Dorsolateral prefrontal cortex (tissue), 120 donors: ENCODE measurements at regions of chr2 and their contacts with region 1.

Region 1: DNA sequence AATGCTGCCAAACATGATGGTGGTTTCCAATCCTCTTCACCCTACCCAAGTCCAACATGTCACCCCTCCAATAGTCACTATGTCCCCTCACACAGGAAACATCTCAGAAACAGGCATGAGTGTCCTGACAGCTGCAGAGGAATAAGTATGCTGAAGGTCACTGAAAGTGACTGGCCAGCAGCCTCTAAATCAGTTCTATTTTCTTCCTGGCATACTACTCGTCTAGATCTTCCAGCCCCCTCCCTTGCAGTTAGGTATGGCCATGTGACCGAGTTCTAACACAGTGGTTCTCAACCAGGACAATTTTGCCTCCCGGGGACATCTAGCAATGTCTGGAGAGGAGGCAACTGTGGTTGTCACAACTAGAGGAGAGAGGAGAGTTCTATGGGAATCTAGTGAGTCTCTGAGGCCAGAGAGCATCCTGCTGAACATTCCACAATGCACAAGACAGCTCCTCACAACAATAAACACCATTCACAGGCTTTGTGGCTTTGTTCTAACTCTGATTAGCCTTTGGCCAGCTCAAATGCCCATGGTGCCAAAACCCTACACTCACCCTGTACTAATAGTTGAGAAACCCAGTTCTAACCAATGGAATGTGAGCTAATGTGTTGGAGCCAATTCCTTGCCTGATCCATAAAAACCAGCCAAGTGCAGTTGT is 12.6 kb upstream of the ID2 start:
- DNase-seq: peak in 2 of 10 donors; percentile 33 to 47
- H3K4me3 ChIP-seq: peak overlapping the region in 1 of 59 donors; percentile 7
- H3K27ac ChIP-seq: peak overlapping the region in 17 of 59 donors; percentile 12 to 75 (median 52)
- H3K27me3 ChIP-seq: no peaks in the 10 kb centered on the region
- CTCF ChIP-seq: peak in 1 of 56 donors; percentile 19

Region 2: GRCh38 chr2:8394131-8394530 is 275.2 kb before region 1 on chr2:
- intact Hi-C with region 1: no loop called
- DNase-seq: no peak
- H3K4me3 ChIP-seq: no peak overlapping the region
- H3K27ac ChIP-seq: no peak overlapping the region
- H3K27me3 ChIP-seq: no peaks in the 10 kb centered on the region
- CTCF ChIP-seq: no peak

Region 3: GRCh38 chr2:8628230-8629209 is 40.8 kb before region 1 on chr2:
- intact Hi-C with region 1: loop called in 1 of 2 experiments (anchors 5 kb)
- DNase-seq: peak in 1 of 10 donors; percentile 26
- H3K4me3 ChIP-seq: no peak overlapping the region
- H3K27ac ChIP-seq: no peak overlapping the region
- H3K27me3 ChIP-seq: no peaks in the 10 kb centered on the region
- CTCF ChIP-seq: no peak

Region 4: DNA sequence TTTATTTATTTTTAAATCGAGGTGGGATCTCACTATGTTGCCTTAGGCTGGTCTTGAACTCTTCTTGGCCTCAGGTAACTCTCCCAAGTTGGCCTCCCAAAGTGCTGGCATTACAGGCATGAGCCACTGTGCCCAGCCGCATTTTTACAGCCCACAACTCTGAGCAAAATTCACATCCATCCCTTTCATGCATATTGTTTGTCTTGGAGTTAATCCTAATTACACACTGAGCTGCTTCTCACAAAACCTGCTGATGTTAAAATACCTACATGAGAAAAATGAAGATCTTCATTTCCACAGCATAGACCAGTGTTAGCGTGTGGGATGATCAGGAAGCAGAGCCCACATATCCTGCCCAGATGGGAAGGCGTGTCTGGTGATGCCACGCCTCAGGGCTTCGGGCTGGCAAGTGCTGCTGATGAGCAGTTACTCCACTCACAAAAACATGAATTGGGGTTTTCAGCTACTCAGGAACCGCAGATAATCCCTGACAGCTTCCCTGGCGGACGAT is 739.4 kb after region 1 on chr2:
- intact Hi-C with region 1: no loop called
- DNase-seq: peak in 8 of 10 donors; percentile 41 to 78 (median 66)
- H3K4me3 ChIP-seq: no peak overlapping the region
- H3K27ac ChIP-seq: peak overlapping the region in 11 of 59 donors; percentile 9 to 54 (median 42)
- H3K27me3 ChIP-seq: no peaks in the 10 kb centered on the region
- CTCF ChIP-seq: no peak